Uterus (tissue), 4 donors: ENCODE measurements at regions of chr9 and their contacts with region 1.

Region 1: DNA sequence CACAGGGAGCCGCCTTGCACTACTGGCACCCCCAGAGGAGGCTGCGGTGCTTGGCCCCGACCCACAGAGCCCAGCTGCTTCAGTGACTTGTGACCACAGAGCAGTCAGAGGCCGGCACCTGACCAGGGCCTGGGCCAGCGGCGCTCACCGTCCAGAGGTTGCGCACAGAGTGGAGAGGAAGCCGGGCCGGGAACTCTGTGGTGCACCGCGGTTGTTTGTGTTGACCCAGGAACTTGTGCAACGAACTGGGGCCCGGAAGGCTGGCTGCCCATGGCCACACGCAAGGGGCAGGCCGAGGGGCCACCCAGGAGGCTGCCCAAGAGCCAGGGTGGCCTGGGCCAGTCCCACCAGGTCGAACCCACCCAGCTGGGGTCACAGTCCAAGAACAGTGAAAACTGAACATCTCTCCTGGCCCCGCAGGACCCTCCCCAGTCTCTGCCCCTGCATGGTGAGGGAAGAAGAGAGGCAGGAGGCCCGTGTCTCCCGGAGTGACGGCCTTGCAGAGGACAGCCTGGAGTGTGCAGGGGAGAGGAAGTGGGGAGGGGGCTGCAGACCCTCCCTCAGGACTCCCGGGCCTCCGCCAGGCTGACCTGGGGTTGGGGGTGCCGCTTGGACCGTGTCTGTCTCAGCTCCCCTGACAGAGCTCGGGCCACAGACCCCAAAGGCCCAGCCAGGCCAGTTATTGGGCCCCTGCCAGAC is 42.8 kb upstream of the EGFL7 start:
- DNase-seq: no peak
- H3K4me3 ChIP-seq: no peak overlapping the region
- H3K27ac ChIP-seq: no peak overlapping the region
- H3K4me1 ChIP-seq: no peaks in the 10 kb centered on the region
- H3K27me3 ChIP-seq: no peaks in the 10 kb centered on the region
- CTCF ChIP-seq: no peak
- POLR2A ChIP-seq: no peak

Region 2: DNA sequence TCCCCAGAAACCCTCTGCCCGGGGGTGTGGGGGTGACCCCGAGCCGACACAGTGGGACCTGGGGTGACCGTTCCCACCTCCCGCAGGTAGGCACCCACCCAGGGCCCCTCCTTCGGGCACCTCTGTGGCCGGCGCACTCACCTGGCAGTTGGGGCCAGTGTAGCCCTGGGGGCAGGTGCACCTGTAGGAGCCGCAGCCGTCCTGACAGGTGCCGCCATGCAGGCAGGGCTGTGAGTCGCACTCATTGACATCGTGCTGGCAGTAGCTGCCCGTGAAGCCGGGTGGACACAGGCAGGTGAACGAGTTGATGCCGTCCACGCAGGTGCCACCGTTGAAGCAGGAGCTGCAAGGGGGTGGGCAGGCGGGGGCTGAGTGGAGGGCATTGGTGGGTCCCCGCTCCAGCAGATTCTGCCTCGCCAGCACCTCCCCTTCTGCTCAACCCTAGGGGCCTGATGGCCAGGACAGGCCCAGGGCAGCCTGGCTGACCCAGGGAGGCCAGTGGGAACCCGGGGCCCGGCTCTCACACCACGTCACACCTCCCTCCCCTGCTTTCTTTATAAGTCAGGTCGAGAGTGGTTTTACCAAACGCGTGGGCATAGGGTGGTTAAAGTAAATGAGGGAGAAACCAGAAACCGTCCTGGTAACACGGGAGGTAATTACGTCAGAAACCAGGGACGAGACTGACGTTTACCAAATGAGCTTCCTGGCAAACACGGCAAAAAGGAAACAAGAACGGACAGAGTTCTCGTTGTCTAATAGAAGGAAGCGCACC is 111.0 kb before region 1 on chr9:
- intact Hi-C with region 1: loop called (anchors 5 kb)
- DNase-seq: no peak
- H3K4me3 ChIP-seq: no peak overlapping the region
- H3K27ac ChIP-seq: no peak overlapping the region
- H3K4me1 ChIP-seq: no peaks in the 10 kb centered on the region
- H3K27me3 ChIP-seq: no peaks in the 10 kb centered on the region
- CTCF ChIP-seq: no peak
- POLR2A ChIP-seq: no peak